GM10248 (cell line): ENCODE measurements at regions of chr5 and their contacts with region 1.

Region 1: DNA sequence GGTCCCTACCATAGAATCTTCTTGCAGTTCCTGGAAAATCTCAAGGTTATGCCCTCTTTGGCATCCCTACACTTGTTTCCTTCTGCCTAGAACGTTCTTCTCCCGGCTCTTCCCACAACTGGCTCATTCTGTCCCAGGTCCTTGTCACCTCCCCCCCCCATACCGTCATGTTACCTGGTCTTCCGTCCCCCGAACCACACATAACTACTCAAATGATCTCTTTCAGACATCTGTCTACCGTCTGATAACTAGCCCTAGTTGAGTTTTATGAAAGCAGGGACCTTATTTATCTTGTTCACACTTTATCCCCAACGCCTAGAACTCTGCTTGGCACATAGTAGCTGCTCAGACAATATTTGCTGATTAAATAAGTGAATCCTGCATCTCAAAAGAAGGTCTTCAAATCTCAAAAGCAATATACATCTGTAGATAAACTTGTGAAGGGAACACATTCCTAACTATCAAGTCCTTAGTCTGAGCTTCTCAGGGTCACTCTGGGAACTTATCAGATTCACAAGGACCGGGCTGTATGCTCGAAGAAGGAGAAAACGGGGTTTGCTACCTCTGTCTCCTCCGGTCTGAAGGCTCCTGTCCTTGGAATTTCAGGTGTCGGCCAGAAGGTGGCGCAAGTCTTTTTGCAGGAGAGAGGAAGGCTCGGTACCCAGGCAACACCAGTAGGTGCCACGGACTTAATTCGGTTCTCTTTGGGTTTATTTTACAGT is 30.0 kb downstream of the LCP2 start:
- DNase-seq: peak; percentile 85
- CTCF ChIP-seq: peak; percentile 85

Region 2: DNA sequence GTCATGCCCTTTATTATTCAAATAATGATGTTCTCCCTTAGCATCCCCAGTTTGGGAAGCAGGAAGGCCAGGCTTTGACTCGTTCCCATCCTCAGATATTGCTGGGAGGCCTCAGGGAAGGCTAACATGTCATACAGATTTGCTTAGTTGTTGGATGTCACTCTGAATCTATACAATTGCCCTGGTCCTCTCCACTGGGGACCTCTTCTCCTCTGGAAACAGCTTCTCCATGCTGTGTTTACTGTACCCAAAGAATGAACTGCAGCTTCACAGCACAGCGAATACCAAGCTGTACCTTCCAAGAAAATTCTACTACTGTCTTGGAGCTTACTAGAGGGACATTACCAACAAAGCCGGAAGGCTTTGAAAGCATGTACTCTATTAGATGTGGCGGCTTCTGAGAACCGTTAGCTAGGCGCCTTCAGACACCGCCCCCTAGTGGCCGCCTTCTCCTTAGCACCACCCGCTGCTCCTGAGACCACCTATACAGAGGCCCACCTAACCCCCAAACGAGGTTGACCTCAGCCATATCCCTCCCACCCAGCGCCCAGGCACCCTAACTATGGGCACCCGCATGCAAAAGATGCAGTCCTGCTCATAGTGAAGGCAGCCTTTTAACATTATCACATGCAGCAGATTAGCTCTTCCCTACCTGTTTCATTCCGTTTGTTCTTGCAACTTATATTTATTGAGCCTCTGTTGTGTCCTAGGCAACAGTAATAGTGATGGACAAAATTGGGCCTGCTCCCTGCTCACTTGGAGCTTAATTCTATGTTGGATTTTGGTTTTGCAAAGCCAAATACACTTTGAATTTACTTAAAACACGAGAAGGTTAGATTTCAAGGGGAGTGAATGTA is 196.8 kb before region 1 on chr5:
- CTCF ChIA-PET with region 1: no interaction called
- POLR2A ChIA-PET with region 1: no interaction called
- DNase-seq: no peak
- CTCF ChIP-seq: peak; percentile 24

Region 3: GRCh38 chr5:170257370-170257769 is 10.2 kb before region 1 on chr5:
- CTCF ChIA-PET with region 1: interaction called, 25 read pairs
- POLR2A ChIA-PET with region 1: no interaction called
- DNase-seq: no peak
- CTCF ChIP-seq: no peak

Region 4: DNA sequence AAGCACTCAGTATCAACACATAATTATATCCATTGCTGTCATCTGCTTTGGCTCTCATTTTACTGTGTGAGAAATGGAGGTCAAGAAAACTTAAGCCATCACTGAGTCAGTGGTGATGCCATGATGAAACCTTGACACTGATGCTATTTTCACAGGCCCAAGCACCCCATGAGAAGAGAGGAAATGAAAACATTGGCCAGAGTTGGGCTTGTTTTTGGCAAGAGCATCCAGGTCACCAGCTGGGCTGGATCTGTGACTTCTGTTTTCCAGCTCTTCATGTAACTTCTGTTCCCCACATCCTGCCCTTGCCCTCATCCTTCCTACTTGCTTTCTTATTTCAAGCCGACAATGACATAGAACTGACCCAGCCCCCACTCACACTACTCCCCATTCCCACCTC is 19.9 kb after region 1 on chr5:
- CTCF ChIA-PET with region 1: interaction called, 50 read pairs
- POLR2A ChIA-PET with region 1: no interaction called
- DNase-seq: no peak
- CTCF ChIP-seq: no peak

Region 5: DNA sequence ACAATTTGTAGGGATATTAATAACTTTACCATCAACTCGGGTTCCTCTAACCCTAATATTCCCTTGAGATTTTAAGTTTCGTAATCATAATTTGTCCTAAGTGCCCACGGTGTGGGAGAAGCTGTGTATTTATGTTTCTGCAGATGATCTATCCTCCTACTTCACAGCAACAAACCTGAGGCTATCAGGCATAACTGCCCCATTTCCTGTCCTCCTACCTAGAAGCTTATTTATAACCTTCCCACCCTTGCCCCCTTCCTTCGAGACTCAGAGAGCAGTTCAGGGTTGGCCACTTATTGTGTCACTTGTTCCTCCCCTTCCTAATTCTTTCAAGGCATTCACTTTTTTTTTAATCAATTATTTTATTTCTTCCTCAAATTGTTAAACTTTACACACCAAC is 59.6 kb after region 1 on chr5:
- CTCF ChIA-PET with region 1: interaction called, 23 read pairs
- POLR2A ChIA-PET with region 1: no interaction called
- DNase-seq: no peak
- CTCF ChIP-seq: no peak

Region 6: GRCh38 chr5:170338933-170339779 is 71.6 kb after region 1 on chr5:
- CTCF ChIA-PET with region 1: interaction called, 79 read pairs
- POLR2A ChIA-PET with region 1: no interaction called
- DNase-seq: peak; percentile 82
- CTCF ChIP-seq: peak; percentile 99

Region 7: DNA sequence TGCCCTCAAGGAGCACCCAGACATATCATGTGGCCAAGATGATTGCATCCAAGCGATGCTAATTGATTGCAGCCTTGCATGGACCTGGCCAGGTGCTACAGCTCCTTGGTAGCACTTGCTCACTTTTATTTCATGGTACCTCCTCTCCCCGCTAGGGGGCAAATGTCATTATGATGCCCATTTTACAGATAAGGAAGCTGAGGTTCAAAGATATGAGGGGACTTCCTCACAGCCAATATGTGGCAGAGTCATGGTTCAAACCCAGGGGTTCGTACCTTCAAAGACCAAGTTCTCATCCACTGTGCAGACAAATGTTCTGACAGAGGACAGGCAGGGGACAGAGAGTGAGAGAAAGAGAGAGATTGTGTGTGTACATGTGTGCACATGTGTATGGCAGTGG is 143.5 kb after region 1 on chr5:
- CTCF ChIA-PET with region 1: interaction called, 10 read pairs
- POLR2A ChIA-PET with region 1: no interaction called
- DNase-seq: peak; percentile 40
- CTCF ChIP-seq: peak; percentile 38

Region 8: DNA sequence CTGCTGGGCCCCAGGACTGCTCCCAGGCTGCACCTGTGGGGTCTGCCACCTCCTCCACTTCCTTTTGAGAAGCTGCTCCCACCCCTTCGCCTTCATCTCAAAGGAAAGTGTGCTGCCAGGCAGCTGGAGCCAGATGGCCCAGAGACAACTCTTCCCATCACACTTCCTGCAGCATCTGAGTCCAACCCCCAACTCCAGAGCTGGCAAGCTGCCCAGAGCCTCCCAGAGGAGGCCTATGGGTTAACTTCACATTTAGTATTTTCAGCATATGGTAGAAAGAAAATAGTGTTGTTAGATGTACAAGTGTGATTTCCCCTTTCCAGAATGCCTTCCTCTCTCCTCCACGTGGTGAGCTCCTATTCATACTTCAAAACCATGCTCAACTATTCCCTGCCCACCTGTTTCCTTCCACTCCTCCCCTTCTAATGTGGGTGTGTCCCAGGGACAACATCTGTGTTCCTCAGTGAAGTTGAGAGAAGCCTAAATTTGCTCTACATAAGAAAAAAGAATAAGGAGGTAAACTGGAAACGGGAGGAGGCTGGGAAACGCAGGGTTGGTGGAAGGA is 160.2 kb after region 1 on chr5:
- CTCF ChIA-PET with region 1: interaction called, 10 read pairs
- POLR2A ChIA-PET with region 1: no interaction called
- DNase-seq: no peak
- CTCF ChIP-seq: no peak